Gastrocnemius medialis (tissue), 4 donors: ENCODE measurements at regions of chr22 and their contacts with region 1.

Region 1: DNA sequence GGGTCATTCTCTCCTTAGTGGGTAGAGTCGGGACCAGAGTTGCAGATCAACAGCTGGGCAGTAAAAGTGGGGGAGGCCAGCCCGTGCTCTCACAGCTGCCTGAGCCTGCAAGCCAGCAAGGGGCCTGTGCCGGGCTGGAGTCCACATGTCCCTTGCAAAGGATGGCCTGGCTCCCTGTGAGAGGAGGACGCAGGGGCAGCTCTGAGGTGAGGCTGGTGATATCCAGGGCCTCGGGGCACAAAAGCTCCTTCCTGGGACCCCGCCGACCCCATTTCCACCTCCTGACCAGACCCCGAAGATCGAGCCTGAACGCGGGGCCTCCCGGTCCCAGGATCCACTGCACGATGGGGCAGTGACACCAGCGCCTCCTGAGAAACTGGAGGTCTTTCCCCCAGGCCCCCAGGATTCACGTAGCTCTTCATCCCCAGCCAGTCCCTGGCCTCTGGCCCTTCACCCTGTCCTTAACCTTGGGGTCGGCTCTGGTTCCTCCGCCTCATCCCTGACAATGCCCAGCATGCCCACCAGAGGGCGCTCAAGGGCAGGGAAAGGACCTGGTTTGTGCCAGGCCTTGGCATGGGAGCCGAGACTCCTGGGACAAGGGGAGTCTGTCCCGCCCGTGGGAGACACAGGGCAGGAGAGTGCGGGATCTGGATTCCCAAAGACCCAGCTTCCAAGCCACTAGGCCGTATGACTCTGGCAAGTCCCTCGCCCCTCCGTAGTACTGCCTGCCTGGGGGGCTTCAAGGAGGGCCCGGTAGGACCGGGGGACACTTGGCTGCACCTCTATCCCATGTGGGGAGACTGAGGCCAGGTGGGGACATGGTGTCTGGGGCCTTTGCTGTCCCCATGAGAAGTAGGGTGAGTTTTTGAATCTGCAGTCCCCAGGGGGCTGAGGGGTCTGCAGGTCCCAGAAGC is 17.8 kb upstream of the WNT7B start:
- DNase-seq: peak; percentile 65 to 79
- ATAC-seq: peak; percentile 55 to 78
- H3K4me3 ChIP-seq: no peak overlapping the region
- H3K27ac ChIP-seq: peak overlapping the region in 3 of 4 donors; percentile 20 to 83 (median 23)
- H3K4me1 ChIP-seq: peaks cover 39 to 52% of the 10 kb centered on the region in 2 donors
- H3K27me3 ChIP-seq: no peaks in the 10 kb centered on the region
- CTCF ChIP-seq: peak; percentile 94 to 99 (median 98)
- POLR2A ChIP-seq: no peak

Region 2: DNA sequence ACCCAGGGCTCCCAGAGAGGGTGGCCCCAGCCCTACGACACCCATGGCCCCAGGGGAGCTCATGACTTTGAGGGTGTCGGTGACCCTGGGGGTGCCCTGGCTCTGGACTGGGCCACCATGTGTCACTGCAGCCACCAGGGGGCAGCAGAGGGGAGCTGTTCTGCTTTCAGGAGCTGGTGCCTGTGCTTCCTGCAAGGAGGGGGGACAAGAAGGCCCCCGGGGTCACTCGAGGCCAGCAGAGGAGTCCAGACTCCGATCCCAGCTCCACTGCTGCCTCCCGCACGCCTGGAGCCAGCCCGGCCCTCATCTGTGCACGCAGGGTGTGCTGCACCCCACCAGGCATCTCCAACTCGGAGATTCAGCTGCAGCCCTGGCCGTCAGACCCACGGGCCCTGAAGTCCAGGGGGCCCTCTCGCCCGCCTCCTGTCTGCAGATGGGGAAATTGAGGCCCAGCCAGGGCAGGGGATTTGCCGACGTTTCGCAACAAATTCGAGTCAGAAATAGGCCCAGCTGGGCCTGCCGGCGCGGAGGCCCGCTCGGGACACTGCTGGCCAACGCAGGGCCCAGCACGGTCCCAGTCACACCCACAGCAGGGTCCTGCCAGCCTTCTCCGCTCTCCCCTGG is 11.7 kb after region 1 on chr22:
- in situ Hi-C with region 1: no loop called
- intact Hi-C with region 1: loop called (anchors 1 kb)
- DNase-seq: peak; percentile 78 to 91
- ATAC-seq: peak; percentile 77 to 78
- H3K4me3 ChIP-seq: peak overlapping the region in 3 of 4 donors; percentile 8 to 29 (median 27)
- H3K27ac ChIP-seq: peak overlapping the region; percentile 84 to 96 (median 92)
- H3K4me1 ChIP-seq: peaks cover 30 to 40% of the 10 kb centered on the region in 2 donors
- H3K27me3 ChIP-seq: no peaks in the 10 kb centered on the region
- CTCF ChIP-seq: peak; percentile 93 to 99 (median 98)
- POLR2A ChIP-seq: no peak

Region 3: GRCh38 chr22:46309526-46310085 is 314.9 kb after region 1 on chr22:
- in situ Hi-C with region 1: loop called in 3 of 4 experiments (anchors 5 to 10 kb)
- intact Hi-C with region 1: loop called (anchors 2 kb)
- DNase-seq: no peak
- ATAC-seq: no peak
- H3K4me3 ChIP-seq: no peak overlapping the region
- H3K27ac ChIP-seq: no peak overlapping the region
- H3K4me1 ChIP-seq: peaks cover 0 to 5% of the 10 kb centered on the region in 2 donors
- H3K27me3 ChIP-seq: no peaks in the 10 kb centered on the region
- CTCF ChIP-seq: no peak
- POLR2A ChIP-seq: no peak

Region 4: DNA sequence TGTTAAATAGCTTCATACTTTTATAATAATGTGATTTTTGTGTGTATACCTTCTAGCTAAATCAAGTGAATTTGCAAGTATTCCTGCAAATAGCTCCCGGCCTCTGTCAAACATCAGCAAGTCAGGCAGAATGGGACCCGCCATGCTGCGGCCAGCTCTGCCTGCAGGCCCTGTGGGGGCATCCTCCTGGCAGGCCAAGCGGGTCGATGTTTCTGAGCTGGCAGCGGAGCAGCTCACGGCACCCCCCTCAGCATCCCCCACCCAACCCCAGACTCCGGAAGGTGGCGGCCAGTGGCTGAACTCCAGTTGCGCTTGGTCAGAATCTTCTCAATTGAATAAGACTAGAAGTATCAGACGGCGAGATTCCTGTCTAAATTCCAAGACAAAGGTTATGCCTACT is 321.2 kb after region 1 on chr22:
- in situ Hi-C with region 1: loop called in 2 of 4 experiments (anchors 5 to 10 kb)
- intact Hi-C with region 1: loop called (anchors 2 kb)
- DNase-seq: no peak
- ATAC-seq: no peak
- H3K4me3 ChIP-seq: no peak overlapping the region
- H3K27ac ChIP-seq: no peak overlapping the region
- H3K4me1 ChIP-seq: peaks cover 0 to 5% of the 10 kb centered on the region in 2 donors
- H3K27me3 ChIP-seq: no peaks in the 10 kb centered on the region
- CTCF ChIP-seq: no peak
- POLR2A ChIP-seq: no peak